ENCODE measurements at regions of chr5 and their contacts with region 1.

Region 1: DNA sequence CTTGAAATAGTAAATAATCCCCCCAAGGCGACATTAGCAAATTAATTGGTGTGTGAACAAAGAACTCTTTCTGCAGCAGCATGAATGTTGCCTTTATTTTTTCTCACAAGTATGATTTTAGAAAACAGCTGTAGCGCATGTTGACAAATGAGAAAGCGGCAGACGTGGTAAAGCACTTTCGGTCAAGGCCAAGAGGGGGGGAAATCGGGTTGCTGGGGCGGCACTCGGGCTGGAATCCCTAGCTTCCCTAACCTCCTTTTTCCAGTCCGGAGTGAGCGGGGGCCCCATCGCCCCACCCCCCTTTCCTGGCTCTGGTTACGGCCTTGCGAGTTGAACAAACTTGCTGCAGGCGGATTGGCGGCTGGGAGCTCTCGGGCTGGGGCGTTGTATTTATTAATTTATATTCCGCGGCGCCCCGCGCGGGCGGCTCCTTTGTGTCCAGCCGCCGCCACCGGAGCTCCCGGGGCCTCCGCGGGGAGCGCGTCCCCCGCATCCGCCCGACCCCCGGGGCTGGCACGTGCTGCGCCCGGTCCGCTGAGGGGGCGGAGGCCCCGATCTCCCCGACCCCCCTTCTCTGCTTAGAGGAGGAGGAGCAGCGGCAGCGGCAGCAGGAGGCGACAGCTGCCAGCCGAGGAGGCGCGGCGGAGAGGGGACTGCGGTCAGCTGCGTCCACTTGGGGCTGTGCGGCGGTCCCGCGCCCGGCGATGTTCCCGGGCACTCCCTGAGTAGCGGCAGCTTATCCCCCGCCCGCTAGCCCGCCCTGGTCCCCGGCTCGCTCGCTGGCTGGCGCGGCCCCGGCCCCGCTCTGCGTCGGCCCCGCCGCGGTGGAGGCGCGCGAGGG is at the start of gene RHOBTB3:
- DNase-seq: peak; percentile 73 to 94 (median 86)
- ATAC-seq: peak; percentile 58
- H3K4me3 ChIP-seq: peak within 1 kb of the TSS; percentile 81
- H3K27ac ChIP-seq: peak within 1 kb of the TSS; percentile 85
- H3K4me1 ChIP-seq: peaks cover 38 to 40% of the 10 kb centered on the region in 2 experiments
- H3K27me3 ChIP-seq: no peaks in the 10 kb centered on the region; a peak in 1 of 5 replicates
- CTCF ChIP-seq: peak in 2 of 3 experiments; percentile 20 to 31; a peak in 2 of 6 replicates
- EP300 ChIP-seq: peak; percentile 54
- POLR2A ChIP-seq: no peak
- RAD21 ChIP-seq: peak; percentile 27 to 37; a peak in 1 of 4 replicates
- polyA plus RNA-seq, gene RHOBTB3: 39.7 to 53.0 TPM

Region 2: GRCh38 chr5:95446009-95446408 is 284.9 kb before region 1 on chr5:
- CTCF ChIA-PET with region 1: no interaction called
- POLR2A ChIA-PET with region 1: no interaction called
- in situ Hi-C with region 1: no loop called
- intact Hi-C with region 1: no loop called
- DNase-seq: peak in 3 of 4 experiments; percentile 5 to 33 (median 29)
- ATAC-seq: peak; percentile 77
- H3K4me3 ChIP-seq: no peak overlapping the region
- H3K27ac ChIP-seq: no peak overlapping the region
- H3K4me1 ChIP-seq: peaks cover 0 to 11% of the 10 kb centered on the region in 2 experiments; a peak in 2 of 5 replicates
- H3K27me3 ChIP-seq: peaks cover 3 to 5% of the 10 kb centered on the region in 2 experiments; a peak in 4 of 5 replicates
- CTCF ChIP-seq: no peak
- EP300 ChIP-seq: no peak
- POLR2A ChIP-seq: no peak
- RAD21 ChIP-seq: no peak

Region 3: GRCh38 chr5:95554647-95555548 is 176.1 kb before region 1 on chr5 and contains the starts of genes ARSK and SKIC3:
- CTCF ChIA-PET with region 1: no interaction called
- POLR2A ChIA-PET with region 1: interaction called, 3 read pairs
- in situ Hi-C with region 1: no loop called
- intact Hi-C with region 1: loop called (anchors 10 kb)
- DNase-seq: peak; percentile 86 to 98 (median 92)
- ATAC-seq: peak; percentile 92
- H3K4me3 ChIP-seq: peak within 1 kb of the TSS; percentile 66
- H3K27ac ChIP-seq: peak within 1 kb of the TSS; percentile 84
- H3K4me1 ChIP-seq: peaks cover 7 to 15% of the 10 kb centered on the region in 2 experiments; a peak in 4 of 5 replicates
- H3K27me3 ChIP-seq: no peaks in the 10 kb centered on the region
- CTCF ChIP-seq: peak; percentile 23 to 49 (median 31)
- EP300 ChIP-seq: no peak; the same call in 1 of the 2 replicates
- POLR2A ChIP-seq: peak; percentile 91
- RAD21 ChIP-seq: peak; percentile 35 to 40; a peak in 2 of 4 replicates
- polyA plus RNA-seq, gene ARSK: 2.7 to 2.8 TPM
- polyA plus RNA-seq, gene SKIC3: 35.1 to 44.1 TPM

Region 4: DNA sequence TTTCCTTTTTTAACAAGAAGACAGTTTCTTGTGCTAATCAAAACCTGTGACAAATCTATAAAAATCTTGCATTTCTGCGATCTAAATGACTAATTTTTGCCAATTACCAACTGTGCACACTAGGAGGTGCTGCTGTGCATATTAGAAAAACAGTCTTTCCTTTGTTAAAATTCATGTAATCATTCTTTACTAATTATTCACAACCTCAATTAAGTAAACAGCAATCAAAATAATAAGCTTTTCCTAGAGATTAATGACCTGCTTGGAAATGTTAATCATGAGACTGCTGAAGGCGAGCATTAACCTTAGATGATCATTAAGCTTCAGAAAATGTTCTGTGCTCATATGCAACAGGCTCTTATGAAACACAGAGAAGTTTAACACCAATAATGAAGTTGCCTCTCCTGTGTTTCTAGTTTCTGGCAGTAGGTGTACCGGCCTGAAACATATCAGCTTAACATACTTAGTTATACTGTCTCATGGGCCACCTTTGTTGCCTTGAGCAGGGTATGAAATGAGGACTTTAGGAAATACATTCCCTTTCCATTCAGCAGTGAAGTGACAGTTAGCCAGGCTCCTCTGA is 66.7 kb before region 1 on chr5:
- CTCF ChIA-PET with region 1: interaction called, 3 read pairs
- POLR2A ChIA-PET with region 1: interaction called, 18 read pairs
- in situ Hi-C with region 1: loop called (anchors 5 kb)
- intact Hi-C with region 1: loop called (anchors 1 kb)
- DNase-seq: peak in 2 of 4 experiments; percentile 23 to 66
- ATAC-seq: peak; percentile 24
- H3K4me3 ChIP-seq: no peak overlapping the region
- H3K27ac ChIP-seq: peak overlapping the region; percentile 39
- H3K4me1 ChIP-seq: peaks cover 0 to 16% of the 10 kb centered on the region in 2 experiments; a peak in 3 of 5 replicates
- H3K27me3 ChIP-seq: no peaks in the 10 kb centered on the region
- CTCF ChIP-seq: peak; percentile 48 to 83 (median 66); a peak in 5 of 6 replicates
- EP300 ChIP-seq: no peak
- POLR2A ChIP-seq: no peak; the same call in none of the 2 replicates
- RAD21 ChIP-seq: peak; percentile 84 to 89

Region 5: GRCh38 chr5:95712347-95712958 is 18.5 kb before region 1 on chr5:
- CTCF ChIA-PET with region 1: no interaction called
- POLR2A ChIA-PET with region 1: interaction called, 50 read pairs
- in situ Hi-C with region 1: no loop called
- intact Hi-C with region 1: loop called (anchors 1 kb)
- DNase-seq: peak; percentile 82 to 97 (median 87)
- ATAC-seq: peak; percentile 87
- H3K4me3 ChIP-seq: peak overlapping the region; percentile 51; the same call in 1 of the 2 replicates
- H3K27ac ChIP-seq: peak overlapping the region; percentile 99
- H3K4me1 ChIP-seq: peaks cover 25 to 63% of the 10 kb centered on the region in 2 experiments
- H3K27me3 ChIP-seq: no peaks in the 10 kb centered on the region
- CTCF ChIP-seq: no peak
- EP300 ChIP-seq: peak; percentile 100
- POLR2A ChIP-seq: peak; percentile 83
- RAD21 ChIP-seq: peak in 1 of 2 experiments; percentile 37; a peak in 2 of 4 replicates

Region 6: DNA sequence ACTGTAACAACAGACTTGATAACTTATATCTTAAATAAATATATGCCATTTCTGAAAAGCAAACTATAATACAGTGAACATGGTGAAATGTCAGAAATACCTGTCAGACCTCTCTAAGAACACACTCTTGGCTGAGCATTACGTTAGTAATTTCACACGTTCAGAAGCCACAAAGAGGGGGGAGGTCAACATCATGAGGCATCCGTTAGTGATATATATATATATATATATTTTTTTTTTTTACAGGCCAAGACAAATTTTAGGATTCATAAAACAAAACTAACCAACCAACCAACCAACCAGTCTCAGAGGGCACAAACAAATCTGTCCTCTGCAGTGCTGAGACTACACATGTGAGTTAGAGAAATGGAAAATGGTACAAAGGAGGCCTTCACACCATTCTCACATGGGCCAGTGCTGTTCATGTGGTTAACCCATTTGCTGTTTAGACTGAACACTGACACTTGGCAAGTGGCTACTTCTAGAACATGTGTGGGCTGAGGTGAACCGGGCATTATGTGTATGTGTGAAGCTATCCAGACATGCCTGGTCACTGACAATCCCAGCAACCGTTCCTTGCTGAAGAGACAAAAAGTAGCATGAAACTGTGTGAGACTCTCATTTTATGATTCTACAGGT is 176.2 kb after region 1 on chr5:
- CTCF ChIA-PET with region 1: no interaction called
- POLR2A ChIA-PET with region 1: no interaction called
- in situ Hi-C with region 1: no loop called
- intact Hi-C with region 1: no loop called
- DNase-seq: no peak
- ATAC-seq: no peak
- H3K4me3 ChIP-seq: no peak overlapping the region
- H3K27ac ChIP-seq: no peak overlapping the region
- H3K4me1 ChIP-seq: no peaks in the 10 kb centered on the region
- H3K27me3 ChIP-seq: no peaks in the 10 kb centered on the region
- CTCF ChIP-seq: no peak
- EP300 ChIP-seq: no peak
- POLR2A ChIP-seq: no peak
- RAD21 ChIP-seq: no peak

Region 7: DNA sequence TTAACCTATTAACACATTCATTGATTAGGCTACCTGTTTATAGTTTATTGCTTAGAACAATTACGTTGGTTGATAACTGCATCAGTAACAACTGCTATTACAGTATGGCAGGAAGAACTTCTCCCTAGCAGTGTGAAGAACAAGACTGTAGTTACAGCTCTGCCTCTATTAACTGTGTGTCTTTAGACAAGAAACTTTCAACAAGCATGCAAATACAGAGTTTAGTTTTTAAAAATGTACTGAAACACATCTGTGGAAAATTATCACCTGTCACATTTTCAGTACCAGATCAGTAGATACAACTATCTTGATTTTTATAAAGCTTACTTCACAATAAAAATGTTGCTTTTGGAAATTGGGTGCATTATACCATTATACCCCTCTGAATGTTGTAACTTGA is 208.5 kb after region 1 on chr5:
- CTCF ChIA-PET with region 1: no interaction called
- POLR2A ChIA-PET with region 1: no interaction called
- in situ Hi-C with region 1: no loop called
- intact Hi-C with region 1: loop called (anchors 10 kb)
- DNase-seq: no peak
- ATAC-seq: no peak
- H3K4me3 ChIP-seq: no peak overlapping the region
- H3K27ac ChIP-seq: no peak overlapping the region
- H3K4me1 ChIP-seq: peaks cover 9 to 60% of the 10 kb centered on the region in 2 experiments
- H3K27me3 ChIP-seq: no peaks in the 10 kb centered on the region
- CTCF ChIP-seq: no peak
- EP300 ChIP-seq: no peak
- POLR2A ChIP-seq: no peak
- RAD21 ChIP-seq: no peak